Adrenal gland (tissue), 19 donors: ENCODE measurements at regions of chr22 and their contacts with region 1.

Region 1: GRCh38 chr22:19717691-19718455 is 3.6 kb downstream of the SEPTIN5 start:
- DNase-seq: peak; percentile 58 to 83 (median 72)
- H3K4me3 ChIP-seq: peak overlapping the region in 3 of 4 donors; percentile 54 to 71 (median 70)
- H3K27ac ChIP-seq: no peak overlapping the region
- H3K4me1 ChIP-seq: peaks cover 9 to 13% of the 10 kb centered on the region in 2 donors
- H3K27me3 ChIP-seq: no peaks in the 10 kb centered on the region
- CTCF ChIP-seq: peak; percentile 51 to 97 (median 78)
- POLR2A ChIP-seq: no peak

Region 2: DNA sequence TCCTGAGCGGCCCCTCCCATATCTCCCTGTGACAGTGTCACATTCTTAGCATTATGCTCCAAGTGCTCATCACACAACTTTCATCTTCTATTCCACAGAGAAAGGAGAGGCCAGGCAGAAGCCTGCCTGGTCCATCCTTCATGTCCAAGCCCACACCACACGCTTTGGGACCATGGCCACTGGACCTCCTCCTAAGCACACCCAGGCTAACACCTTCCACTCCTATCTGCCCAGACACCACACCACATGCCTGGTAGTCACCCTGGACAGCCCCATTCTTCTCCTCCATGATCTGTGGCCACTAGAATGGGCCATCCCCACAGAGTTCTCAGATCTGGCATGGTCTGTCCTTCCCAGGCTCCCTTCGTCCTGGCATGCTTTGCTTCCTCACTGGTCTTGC is 341.6 kb before region 1 on chr22:
- intact Hi-C with region 1: no loop called
- DNase-seq: peak in 1 of 7 donors; percentile 28
- H3K4me3 ChIP-seq: no peak overlapping the region
- H3K27ac ChIP-seq: no peak overlapping the region
- H3K4me1 ChIP-seq: no peaks in the 10 kb centered on the region
- H3K27me3 ChIP-seq: no peaks in the 10 kb centered on the region
- CTCF ChIP-seq: no peak
- POLR2A ChIP-seq: no peak

Region 3: DNA sequence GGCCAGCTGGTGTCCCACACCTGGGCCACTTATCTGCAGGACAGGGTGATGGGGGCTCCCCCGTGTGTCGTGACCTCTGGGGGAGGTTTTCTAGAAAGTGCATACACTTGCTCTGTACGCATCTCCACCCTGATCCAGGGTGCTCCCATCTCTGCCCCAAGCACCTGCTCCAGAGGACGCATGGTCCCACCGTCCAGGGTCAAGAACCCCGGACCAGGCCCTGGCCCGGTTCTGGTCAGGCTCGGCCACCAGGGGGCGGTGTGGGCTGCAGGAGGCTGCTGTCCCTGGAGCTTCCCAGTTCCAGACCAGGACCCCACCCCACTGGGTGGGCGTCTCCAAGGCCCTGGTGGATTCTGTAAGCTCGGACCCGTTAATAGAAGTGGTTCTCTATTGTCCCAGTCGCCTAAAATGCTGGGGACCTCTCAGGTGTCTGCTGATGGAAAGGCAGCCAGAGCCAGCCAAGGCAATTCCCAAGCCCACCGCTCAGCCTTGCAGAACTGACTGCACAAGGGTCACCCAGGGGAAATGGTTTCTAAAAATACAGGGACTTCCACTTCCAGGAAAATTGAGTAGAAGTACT is 38.3 kb before region 1 on chr22:
- intact Hi-C with region 1: loop called in 1 of 2 experiments (anchors 5 kb)
- DNase-seq: peak in 6 of 7 donors; percentile 32 to 60 (median 46)
- H3K4me3 ChIP-seq: no peak overlapping the region
- H3K27ac ChIP-seq: no peak overlapping the region
- H3K4me1 ChIP-seq: no peaks in the 10 kb centered on the region
- H3K27me3 ChIP-seq: peaks cover 12% of the 10 kb centered on the region
- CTCF ChIP-seq: peak; percentile 18 to 70 (median 59)
- POLR2A ChIP-seq: no peak